BJ (cell line): ENCODE measurements at regions of chr12 and their contacts with region 1.

Region 1: GRCh38 chr12:45215419-45216229 is at the start of gene ANO6:
- DNase-seq: no peak
- H3K4me3 ChIP-seq: peak within 1 kb of the TSS; percentile 82
- H3K27me3 ChIP-seq: no peaks in the 10 kb centered on the region
- CTCF ChIP-seq: peak; percentile 40
- polyA plus RNA-seq, gene ANO6: 45.8 and 72.3 TPM in 2 replicates

Region 2: GRCh38 chr12:45309836-45310626 is 94.4 kb after region 1 on chr12:
- CTCF ChIA-PET with region 1: no interaction called
- POLR2A ChIA-PET with region 1: interaction called, 11 read pairs
- DNase-seq: peak; percentile 83
- H3K4me3 ChIP-seq: no peak overlapping the region
- H3K27me3 ChIP-seq: no peaks in the 10 kb centered on the region
- CTCF ChIP-seq: peak; percentile 35